ENCODE measurements at regions of chr2 and their contacts with region 1.

Region 1: GRCh38 chr2:158753641-158754611 is 41.2 kb upstream of the DAPL1 start:
- DNase-seq: peak; percentile 48
- ATAC-seq: peak; percentile 90
- H3K4me3 ChIP-seq: no peak overlapping the region
- H3K27ac ChIP-seq: no peak overlapping the region
- H3K4me1 ChIP-seq: no peaks in the 10 kb centered on the region
- H3K27me3 ChIP-seq: peaks cover 2% of the 10 kb centered on the region; the same call in 1 of the 2 replicates
- CTCF ChIP-seq: peak; percentile 87 to 93 (median 87)
- POLR2A ChIP-seq: no peak
- RAD21 ChIP-seq: peak; percentile 88

Region 2: GRCh38 chr2:157492189-157492773 is 1261.6 kb before region 1 on chr2:
- CTCF ChIA-PET with region 1: no interaction called
- POLR2A ChIA-PET with region 1: no interaction called
- RAD21 ChIA-PET with region 1: no interaction called
- intact Hi-C with region 1: loop called (anchors 5 kb)
- DNase-seq: peak; percentile 49
- ATAC-seq: peak; percentile 93
- H3K4me3 ChIP-seq: no peak overlapping the region
- H3K27ac ChIP-seq: no peak overlapping the region
- H3K4me1 ChIP-seq: peaks cover 0 to 5% of the 10 kb centered on the region in 2 experiments; a peak in 1 of 4 replicates
- H3K27me3 ChIP-seq: no peaks in the 10 kb centered on the region
- CTCF ChIP-seq: peak; percentile 69 to 89 (median 69); a peak in 5 of 6 replicates
- POLR2A ChIP-seq: no peak
- RAD21 ChIP-seq: peak; percentile 85

Region 3: GRCh38 chr2:157932480-157933159 is 821.3 kb before region 1 on chr2:
- CTCF ChIA-PET with region 1: no interaction called
- POLR2A ChIA-PET with region 1: no interaction called
- RAD21 ChIA-PET with region 1: no interaction called
- intact Hi-C with region 1: no loop called
- DNase-seq: no peak
- ATAC-seq: no peak
- H3K4me3 ChIP-seq: no peak overlapping the region
- H3K27ac ChIP-seq: no peak overlapping the region
- H3K4me1 ChIP-seq: no peaks in the 10 kb centered on the region
- H3K27me3 ChIP-seq: no peaks in the 10 kb centered on the region
- CTCF ChIP-seq: no peak
- POLR2A ChIP-seq: no peak
- RAD21 ChIP-seq: no peak

Region 4: DNA sequence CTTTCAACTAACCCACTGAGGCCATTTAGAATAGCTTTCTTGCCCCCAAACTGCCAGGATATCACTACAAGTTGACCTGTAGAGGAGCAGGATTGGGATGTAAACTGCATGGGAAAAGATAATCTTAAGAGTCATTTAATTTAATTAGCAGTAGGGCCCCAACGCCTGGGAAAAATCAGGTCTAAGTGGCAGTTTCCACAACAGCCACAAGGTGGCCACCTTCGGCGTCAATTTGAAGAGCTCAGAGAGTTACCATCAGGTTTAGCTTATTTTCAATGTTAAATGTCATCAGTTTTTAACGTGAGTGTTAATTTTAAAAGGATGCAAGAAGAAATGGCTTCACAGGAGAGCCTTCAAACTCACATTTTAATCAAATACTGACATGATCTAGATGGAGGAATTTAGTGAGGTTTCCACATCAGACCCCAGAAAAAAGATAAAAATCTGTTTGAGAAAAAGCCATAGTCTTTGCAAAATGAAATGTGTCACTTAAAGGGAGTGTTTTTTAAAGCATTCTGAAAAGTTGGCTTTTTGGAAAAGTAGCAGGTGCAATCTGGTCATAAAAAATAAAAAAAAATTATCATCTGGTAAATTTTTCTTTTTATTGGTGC is 729.5 kb before region 1 on chr2:
- CTCF ChIA-PET with region 1: interaction called, 51 read pairs
- POLR2A ChIA-PET with region 1: no interaction called
- RAD21 ChIA-PET with region 1: interaction called, 3 read pairs
- intact Hi-C with region 1: loop called (anchors 1 kb)
- DNase-seq: no peak
- ATAC-seq: peak; percentile 84
- H3K4me3 ChIP-seq: no peak overlapping the region
- H3K27ac ChIP-seq: no peak overlapping the region
- H3K4me1 ChIP-seq: no peaks in the 10 kb centered on the region
- H3K27me3 ChIP-seq: no peaks in the 10 kb centered on the region
- CTCF ChIP-seq: peak; percentile 75 to 91 (median 75)
- POLR2A ChIP-seq: no peak
- RAD21 ChIP-seq: peak; percentile 79

Region 5: GRCh38 chr2:158034199-158034866 is 719.6 kb before region 1 on chr2:
- CTCF ChIA-PET with region 1: interaction called, 37 read pairs
- POLR2A ChIA-PET with region 1: no interaction called
- RAD21 ChIA-PET with region 1: interaction called, 3 to 8 read pairs
- intact Hi-C with region 1: loop called (anchors 2 kb)
- DNase-seq: peak; percentile 53
- ATAC-seq: peak; percentile 97
- H3K4me3 ChIP-seq: no peak overlapping the region
- H3K27ac ChIP-seq: no peak overlapping the region
- H3K4me1 ChIP-seq: no peaks in the 10 kb centered on the region
- H3K27me3 ChIP-seq: no peaks in the 10 kb centered on the region
- CTCF ChIP-seq: peak; percentile 59 to 70 (median 60)
- POLR2A ChIP-seq: no peak
- RAD21 ChIP-seq: peak; percentile 84

Region 6: GRCh38 chr2:158179660-158180059 is 574.3 kb before region 1 on chr2:
- CTCF ChIA-PET with region 1: interaction called, 16 read pairs
- POLR2A ChIA-PET with region 1: no interaction called
- RAD21 ChIA-PET with region 1: interaction called in 1 of 2 experiments, 3 read pairs
- intact Hi-C with region 1: loop called (anchors 1 kb)
- DNase-seq: peak; percentile 13
- ATAC-seq: peak; percentile 55
- H3K4me3 ChIP-seq: no peak overlapping the region
- H3K27ac ChIP-seq: no peak overlapping the region
- H3K4me1 ChIP-seq: no peaks in the 10 kb centered on the region
- H3K27me3 ChIP-seq: no peaks in the 10 kb centered on the region
- CTCF ChIP-seq: peak; percentile 18 to 44 (median 44); a peak in 3 of 6 replicates
- POLR2A ChIP-seq: no peak
- RAD21 ChIP-seq: peak; percentile 75

Region 7: DNA sequence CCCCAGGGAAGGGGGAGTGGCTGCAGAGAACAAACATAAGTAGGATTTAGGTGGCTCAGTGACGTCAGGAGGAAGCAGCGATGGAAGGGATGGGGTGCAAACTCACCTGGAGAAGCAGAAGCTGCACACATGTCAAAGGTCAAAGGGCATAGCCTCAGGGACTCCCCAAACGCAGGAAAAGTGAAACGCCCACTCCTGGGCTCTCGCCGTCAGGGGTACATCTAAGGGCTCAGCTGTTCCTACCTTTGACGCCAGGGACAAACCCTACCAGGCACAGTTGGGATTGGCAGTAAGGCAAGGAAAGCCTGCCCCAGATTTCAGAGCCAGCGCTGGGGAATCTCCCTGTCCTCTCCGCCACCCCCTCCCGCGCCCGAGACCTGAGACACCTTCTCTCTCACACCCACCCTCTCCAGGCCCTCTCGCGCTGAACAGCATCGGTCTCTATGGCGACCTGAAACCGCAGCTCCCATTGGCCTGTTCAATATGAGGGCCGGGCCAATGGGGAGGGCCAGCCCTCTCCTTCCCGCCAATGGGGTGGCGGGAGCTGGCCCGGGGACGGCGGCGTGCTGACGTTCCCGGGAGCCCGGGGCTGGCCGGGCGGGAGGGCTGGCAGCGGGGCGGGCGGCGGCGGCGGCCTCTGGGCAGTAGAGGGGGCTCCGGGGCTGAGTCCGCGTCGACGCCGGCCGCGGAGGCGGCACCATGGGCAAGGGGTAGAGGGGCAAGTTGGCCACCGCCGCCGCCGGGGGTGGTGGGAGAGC is 297.4 kb before region 1 on chr2 and contains the starts of genes CCDC148 and PKP4:
- CTCF ChIA-PET with region 1: no interaction called
- POLR2A ChIA-PET with region 1: no interaction called
- RAD21 ChIA-PET with region 1: no interaction called
- intact Hi-C with region 1: loop called (anchors 5 kb)
- DNase-seq: peak; percentile 86
- ATAC-seq: peak; percentile 86
- H3K4me3 ChIP-seq: peak within 1 kb of the TSS; percentile 78 to 85
- H3K27ac ChIP-seq: peak within 1 kb of the TSS; percentile 85
- H3K4me1 ChIP-seq: peaks cover 22 to 29% of the 10 kb centered on the region in 2 experiments
- H3K27me3 ChIP-seq: no peaks in the 10 kb centered on the region
- CTCF ChIP-seq: no peak
- POLR2A ChIP-seq: no peak
- RAD21 ChIP-seq: no peak
- total RNA-seq, gene CCDC148: 0.59 TPM
- total RNA-seq, gene PKP4: 55.2 TPM

Region 8: GRCh38 chr2:158723917-158724690 is 29.8 kb before region 1 on chr2:
- CTCF ChIA-PET with region 1: interaction called, 10 read pairs
- POLR2A ChIA-PET with region 1: no interaction called
- RAD21 ChIA-PET with region 1: no interaction called
- intact Hi-C with region 1: no loop called
- DNase-seq: peak; percentile 35
- ATAC-seq: peak; percentile 93
- H3K4me3 ChIP-seq: peak overlapping the region in 1 of 2 experiments; percentile 34; a peak in 3 of 4 replicates
- H3K27ac ChIP-seq: no peak overlapping the region; the same call in 1 of the 2 replicates
- H3K4me1 ChIP-seq: peaks cover 10 to 20% of the 10 kb centered on the region in 2 experiments
- H3K27me3 ChIP-seq: no peaks in the 10 kb centered on the region
- CTCF ChIP-seq: peak; percentile 34 to 82 (median 77); a peak in 5 of 6 replicates
- POLR2A ChIP-seq: no peak
- RAD21 ChIP-seq: peak; percentile 34; the same call in 1 of the 2 replicates